ENCODE measurements at regions of chr2 and their contacts with region 1.

Region 1: GRCh38 chr2:182650704-182651103 is 65.4 kb upstream of the DNAJC10 start:
- DNase-seq: peak in 2 of 5 donors; percentile 12 to 27
- H3K4me3 ChIP-seq: no peak overlapping the region
- H3K4me3 Mint-ChIP-seq: no peak overlapping the region
- H3K27ac ChIP-seq: no peak overlapping the region
- H3K27ac Mint-ChIP-seq: peak overlapping the region in 3 of 7 donors; percentile 36 to 44 (median 39)
- H3K4me1 ChIP-seq: no peaks in the 10 kb centered on the region
- H3K4me1 Mint-ChIP-seq: peaks cover 10 to 21% (median 14%) of the 10 kb centered on the region in 4 donors
- H3K27me3 ChIP-seq: no peaks in the 10 kb centered on the region
- H3K27me3 Mint-ChIP-seq: peaks cover 0 to 4% of the 10 kb centered on the region in 2 donors

Region 2: DNA sequence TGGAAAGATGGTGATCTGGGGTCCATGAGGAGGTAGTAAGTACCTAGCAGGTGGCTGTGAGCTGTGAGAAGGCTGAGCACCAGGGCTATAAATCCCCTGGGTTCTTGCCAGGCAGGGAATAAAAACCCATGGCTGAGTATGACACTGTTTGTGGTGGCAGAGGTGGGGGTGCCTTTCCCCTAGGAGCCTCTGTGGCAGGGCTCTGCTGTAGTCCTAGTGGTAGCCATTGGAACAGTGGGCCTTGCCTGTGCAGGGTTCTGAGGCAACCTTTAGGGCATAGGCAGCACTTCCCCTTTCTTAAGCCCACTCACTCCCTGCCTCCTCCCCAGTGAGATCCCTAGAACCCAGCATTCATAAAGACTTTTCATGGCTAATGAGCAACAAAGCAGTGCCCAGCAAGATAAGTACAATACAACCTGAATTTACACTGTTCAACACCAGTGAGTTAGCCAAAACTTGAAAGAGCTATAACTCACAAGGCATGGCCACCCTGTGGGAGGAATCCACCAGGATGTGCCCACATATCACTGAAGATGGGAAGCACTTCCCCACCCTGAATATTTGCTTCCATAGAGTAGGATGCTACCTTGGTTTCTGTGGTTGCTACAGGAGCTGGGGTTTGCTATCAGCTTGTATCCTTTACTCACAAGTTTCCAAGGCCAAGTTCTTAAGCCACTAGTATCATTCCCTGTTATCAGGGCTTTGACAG is 869.5 kb before region 1 on chr2:
- CTCF ChIA-PET with region 1: no interaction called
- POLR2A ChIA-PET with region 1: no interaction called
- intact Hi-C with region 1: no loop called
- DNase-seq: no peak
- H3K4me3 ChIP-seq: no peak overlapping the region
- H3K4me3 Mint-ChIP-seq: no peak overlapping the region
- H3K27ac ChIP-seq: no peak overlapping the region
- H3K27ac Mint-ChIP-seq: no peak overlapping the region
- H3K4me1 ChIP-seq: no peaks in the 10 kb centered on the region
- H3K4me1 Mint-ChIP-seq: peaks cover 0 to 2% (median under 1%) of the 10 kb centered on the region in 4 donors
- H3K27me3 ChIP-seq: no peaks in the 10 kb centered on the region
- H3K27me3 Mint-ChIP-seq: peaks cover 3 to 7% of the 10 kb centered on the region in 2 donors

Region 3: DNA sequence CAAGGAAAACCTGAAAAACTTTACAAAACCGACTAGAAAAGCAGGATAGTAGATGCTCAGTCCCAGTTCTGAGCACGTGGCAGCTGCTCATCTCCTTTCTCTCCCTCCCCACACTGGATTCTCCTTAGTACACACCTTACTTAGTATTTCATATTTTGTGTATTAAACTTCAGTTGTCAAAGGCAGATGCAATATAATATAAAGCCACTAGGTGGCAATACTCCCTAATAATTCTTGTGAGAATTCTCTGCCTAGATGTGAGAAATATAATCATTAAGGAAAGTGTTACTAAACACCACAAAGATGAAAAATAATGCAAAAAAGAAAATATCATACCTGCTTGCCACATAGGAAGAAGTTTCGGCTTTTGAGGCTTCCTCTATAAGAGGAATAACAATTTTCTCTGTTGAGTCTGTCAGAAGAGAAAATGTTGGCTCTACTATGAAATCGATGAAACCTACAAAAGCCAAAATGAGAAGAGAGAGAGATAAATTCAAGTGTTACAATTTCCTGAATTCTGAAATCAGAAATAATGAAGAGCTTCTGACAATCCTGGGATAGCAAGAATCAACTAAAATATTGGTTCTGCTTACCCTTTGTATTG is 464.5 kb before region 1 on chr2:
- CTCF ChIA-PET with region 1: interaction called, 7 read pairs
- POLR2A ChIA-PET with region 1: no interaction called
- intact Hi-C with region 1: loop called (anchors 1 kb)
- DNase-seq: peak in 4 of 5 donors; percentile 21 to 28 (median 22)
- H3K4me3 ChIP-seq: no peak overlapping the region
- H3K4me3 Mint-ChIP-seq: no peak overlapping the region
- H3K27ac ChIP-seq: no peak overlapping the region
- H3K27ac Mint-ChIP-seq: no peak overlapping the region
- H3K4me1 ChIP-seq: no peaks in the 10 kb centered on the region
- H3K4me1 Mint-ChIP-seq: no peaks in the 10 kb centered on the region
- H3K27me3 ChIP-seq: no peaks in the 10 kb centered on the region
- H3K27me3 Mint-ChIP-seq: peaks cover 3% of the 10 kb centered on the region in 2 donors

Region 4: GRCh38 chr2:182240862-182241371 is 409.8 kb before region 1 on chr2:
- CTCF ChIA-PET with region 1: interaction called, 8 read pairs
- POLR2A ChIA-PET with region 1: no interaction called
- intact Hi-C with region 1: loop called (anchors 2 kb)
- DNase-seq: peak in 2 of 5 donors; percentile 1 to 3
- H3K4me3 ChIP-seq: no peak overlapping the region
- H3K4me3 Mint-ChIP-seq: no peak overlapping the region
- H3K27ac ChIP-seq: no peak overlapping the region
- H3K27ac Mint-ChIP-seq: no peak overlapping the region
- H3K4me1 ChIP-seq: no peaks in the 10 kb centered on the region
- H3K4me1 Mint-ChIP-seq: peaks cover 0 to 2% (median 0%) of the 10 kb centered on the region in 4 donors
- H3K27me3 ChIP-seq: no peaks in the 10 kb centered on the region
- H3K27me3 Mint-ChIP-seq: peaks cover 1 to 2% of the 10 kb centered on the region in 2 donors

Region 5: GRCh38 chr2:182754231-182754630 is 103.5 kb after region 1 on chr2:
- CTCF ChIA-PET with region 1: no interaction called
- POLR2A ChIA-PET with region 1: no interaction called
- intact Hi-C with region 1: no loop called
- DNase-seq: no peak
- H3K4me3 ChIP-seq: no peak overlapping the region
- H3K4me3 Mint-ChIP-seq: no peak overlapping the region
- H3K27ac ChIP-seq: no peak overlapping the region
- H3K27ac Mint-ChIP-seq: no peak overlapping the region
- H3K4me1 ChIP-seq: no peaks in the 10 kb centered on the region
- H3K4me1 Mint-ChIP-seq: peaks cover 0 to under 1% (median 0%) of the 10 kb centered on the region in 4 donors
- H3K27me3 ChIP-seq: no peaks in the 10 kb centered on the region
- H3K27me3 Mint-ChIP-seq: no peaks in the 10 kb centered on the region

Region 6: DNA sequence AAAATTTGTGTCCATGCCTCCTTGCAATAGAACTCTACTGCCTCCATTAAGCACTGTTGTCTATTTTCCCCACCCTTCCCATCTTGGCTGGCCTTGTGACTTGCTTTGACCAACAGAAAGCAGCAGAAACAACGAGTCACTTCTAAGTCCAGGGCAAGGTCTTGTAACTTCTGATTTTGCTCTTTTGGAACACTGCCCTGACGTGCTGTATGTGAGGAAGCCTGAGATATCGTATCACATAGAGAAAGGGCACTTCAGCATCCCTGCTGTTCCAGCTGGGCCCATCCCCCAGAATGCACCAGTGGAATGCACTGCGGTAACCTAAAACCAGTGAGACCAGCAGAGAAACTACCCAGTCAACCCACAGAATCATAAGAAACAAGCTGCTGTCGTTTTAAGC is 359.4 kb after region 1 on chr2:
- CTCF ChIA-PET with region 1: no interaction called
- POLR2A ChIA-PET with region 1: no interaction called
- intact Hi-C with region 1: no loop called
- DNase-seq: no peak
- H3K4me3 ChIP-seq: no peak overlapping the region
- H3K4me3 Mint-ChIP-seq: no peak overlapping the region
- H3K27ac ChIP-seq: no peak overlapping the region
- H3K27ac Mint-ChIP-seq: no peak overlapping the region
- H3K4me1 ChIP-seq: no peaks in the 10 kb centered on the region
- H3K4me1 Mint-ChIP-seq: peaks cover 0 to 8% (median 5%) of the 10 kb centered on the region in 4 donors
- H3K27me3 ChIP-seq: no peaks in the 10 kb centered on the region
- H3K27me3 Mint-ChIP-seq: no peaks in the 10 kb centered on the region

Measured in CD4-positive, alpha-beta memory T cell (primary cell).